Aorta (tissue), 5 donors: ENCODE measurements at regions of chr22 and their contacts with region 1.

Region 1: DNA sequence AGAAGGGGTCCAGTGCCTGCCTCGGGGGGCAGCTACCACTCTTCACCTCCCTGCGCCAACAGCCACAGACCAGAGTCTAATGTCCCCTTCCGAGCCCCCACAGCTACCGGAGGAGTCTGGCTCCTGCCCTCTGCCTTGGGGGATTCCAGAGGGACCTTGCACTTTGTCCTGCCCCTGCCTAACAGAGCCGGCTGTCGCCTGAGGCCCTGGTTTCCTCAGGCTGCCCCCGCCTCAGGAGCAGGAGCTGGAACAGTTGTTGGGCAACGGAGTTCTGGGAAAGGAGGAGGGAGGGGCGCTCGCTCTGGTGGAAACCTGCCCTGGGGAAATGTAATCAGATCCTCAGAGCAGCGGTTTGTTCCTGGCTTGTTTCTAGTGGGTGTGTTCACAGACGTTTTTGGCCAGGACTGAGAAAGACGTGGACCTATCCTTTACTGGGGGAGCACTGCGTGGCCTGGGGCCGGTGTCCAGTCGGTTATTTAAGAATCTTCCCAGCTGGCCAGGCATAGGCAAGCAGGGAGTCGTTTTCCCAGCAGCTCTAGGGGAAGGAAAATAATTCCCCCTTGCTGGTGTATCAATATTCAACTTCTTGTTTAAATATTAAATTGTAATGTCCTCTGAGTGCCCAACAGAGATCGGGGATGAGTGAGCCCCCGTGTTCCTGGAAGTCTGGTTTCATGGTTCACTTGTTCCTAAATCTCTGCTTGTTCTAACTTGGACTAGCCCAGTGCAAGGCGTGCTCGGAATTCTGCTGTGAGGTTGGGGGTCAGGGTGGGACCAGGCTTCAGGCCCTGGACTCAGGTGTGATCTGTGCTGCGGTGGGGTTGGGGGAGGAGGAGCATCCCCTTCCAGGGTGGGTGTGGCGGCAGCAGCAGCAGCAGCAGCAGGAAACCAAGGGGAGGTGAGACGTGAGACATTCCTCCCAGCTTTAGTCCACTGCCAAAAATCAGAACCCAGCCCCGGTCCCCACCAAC is 32.1 kb downstream of the A4GALT start:
- DNase-seq: peak; percentile 91 to 95
- ATAC-seq: peak; percentile 87
- H3K4me3 ChIP-seq: no peak overlapping the region
- H3K27ac ChIP-seq: peak overlapping the region; percentile 3 to 89
- H3K4me1 ChIP-seq: peaks cover 2 to 7% of the 10 kb centered on the region in 2 donors
- H3K27me3 ChIP-seq: no peaks in the 10 kb centered on the region

Region 2: GRCh38 chr22:41876275-41876674 is 812.3 kb before region 1 on chr22:
- intact Hi-C with region 1: no loop called
- DNase-seq: no peak
- ATAC-seq: no peak
- H3K4me3 ChIP-seq: no peak overlapping the region
- H3K27ac ChIP-seq: no peak overlapping the region
- H3K4me1 ChIP-seq: no peaks in the 10 kb centered on the region
- H3K27me3 ChIP-seq: no peaks in the 10 kb centered on the region

Region 3: GRCh38 chr22:42747701-42748513 is 59.4 kb after region 1 on chr22:
- intact Hi-C with region 1: loop called in 1 of 2 experiments (anchors 5 kb)
- DNase-seq: no peak
- ATAC-seq: peak; percentile 3
- H3K4me3 ChIP-seq: no peak overlapping the region
- H3K27ac ChIP-seq: no peak overlapping the region
- H3K4me1 ChIP-seq: no peaks in the 10 kb centered on the region
- H3K27me3 ChIP-seq: no peaks in the 10 kb centered on the region

Region 4: GRCh38 chr22:42769574-42770447 is 81.3 kb after region 1 on chr22:
- intact Hi-C with region 1: no loop called
- DNase-seq: peak; percentile 79 to 89
- ATAC-seq: peak; percentile 74
- H3K4me3 ChIP-seq: no peak overlapping the region
- H3K27ac ChIP-seq: no peak overlapping the region
- H3K4me1 ChIP-seq: no peaks in the 10 kb centered on the region
- H3K27me3 ChIP-seq: no peaks in the 10 kb centered on the region